ENCODE measurements at regions of chr1 and their contacts with region 1.

Region 1: GRCh38 chr1:14598497-14599172 is at the start of gene KAZN:
- DNase-seq: no peak
- H3K4me3 ChIP-seq: no peak within 1 kb of the TSS
- H3K27ac ChIP-seq: no peak within 1 kb of the TSS
- H3K27me3 ChIP-seq: peaks cover 23% of the 10 kb centered on the region
- CTCF ChIP-seq: no peak
- polyA plus RNA-seq, gene KAZN: 3.7 and 5.2 TPM in 2 replicates

Region 2: DNA sequence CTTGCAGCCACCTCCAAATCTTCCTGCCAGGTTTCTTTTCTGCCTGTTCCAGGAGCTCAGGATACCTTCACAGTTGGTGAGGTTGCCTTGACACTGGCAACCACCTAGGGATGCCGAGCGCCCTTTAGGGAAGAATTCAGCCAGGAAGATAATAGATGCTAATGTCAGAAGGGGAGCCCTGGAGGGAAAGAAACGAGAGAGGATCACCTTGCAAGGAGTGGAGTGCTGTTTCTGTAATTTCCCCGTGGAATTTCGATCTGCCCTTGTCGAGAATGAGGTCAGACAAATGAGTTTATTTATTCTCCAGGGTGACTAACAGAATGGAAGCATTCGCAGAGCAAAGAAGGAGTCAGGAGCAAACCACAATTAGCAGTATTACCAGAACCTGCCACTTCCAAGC is 315.9 kb before region 1 on chr1:
- CTCF ChIA-PET with region 1: no interaction called
- POLR2A ChIA-PET with region 1: no interaction called
- DNase-seq: no peak
- H3K4me3 ChIP-seq: no peak overlapping the region
- H3K27ac ChIP-seq: no peak overlapping the region
- H3K27me3 ChIP-seq: no peaks in the 10 kb centered on the region
- CTCF ChIP-seq: no peak

Region 3: DNA sequence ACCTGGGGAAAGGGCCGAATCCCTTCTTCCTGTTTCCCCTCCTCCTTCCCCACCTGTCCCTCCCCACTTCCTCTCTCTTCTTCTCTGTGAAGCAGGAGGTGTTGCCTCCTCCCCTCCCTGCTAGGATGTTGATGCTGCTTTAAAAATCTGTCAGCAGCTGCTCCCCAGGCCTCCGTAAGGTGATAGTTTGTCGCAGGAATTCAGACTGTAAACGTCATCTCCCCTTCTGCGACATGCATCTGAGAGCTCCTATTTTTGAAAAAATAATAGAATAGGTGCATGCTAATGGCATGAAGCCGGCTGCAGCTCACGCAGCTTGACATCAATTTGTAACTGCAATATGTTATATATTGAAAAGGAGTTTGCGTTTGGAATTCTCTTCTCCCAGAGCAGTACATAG is 69.9 kb after region 1 on chr1:
- CTCF ChIA-PET with region 1: interaction called, 10 read pairs
- POLR2A ChIA-PET with region 1: no interaction called
- DNase-seq: no peak
- H3K4me3 ChIP-seq: no peak overlapping the region
- H3K27ac ChIP-seq: no peak overlapping the region
- H3K27me3 ChIP-seq: no peaks in the 10 kb centered on the region
- CTCF ChIP-seq: no peak